Endothelial cell of umbilical vein (primary cell): ENCODE measurements at regions of chr21 and their contacts with region 1.

Region 1: DNA sequence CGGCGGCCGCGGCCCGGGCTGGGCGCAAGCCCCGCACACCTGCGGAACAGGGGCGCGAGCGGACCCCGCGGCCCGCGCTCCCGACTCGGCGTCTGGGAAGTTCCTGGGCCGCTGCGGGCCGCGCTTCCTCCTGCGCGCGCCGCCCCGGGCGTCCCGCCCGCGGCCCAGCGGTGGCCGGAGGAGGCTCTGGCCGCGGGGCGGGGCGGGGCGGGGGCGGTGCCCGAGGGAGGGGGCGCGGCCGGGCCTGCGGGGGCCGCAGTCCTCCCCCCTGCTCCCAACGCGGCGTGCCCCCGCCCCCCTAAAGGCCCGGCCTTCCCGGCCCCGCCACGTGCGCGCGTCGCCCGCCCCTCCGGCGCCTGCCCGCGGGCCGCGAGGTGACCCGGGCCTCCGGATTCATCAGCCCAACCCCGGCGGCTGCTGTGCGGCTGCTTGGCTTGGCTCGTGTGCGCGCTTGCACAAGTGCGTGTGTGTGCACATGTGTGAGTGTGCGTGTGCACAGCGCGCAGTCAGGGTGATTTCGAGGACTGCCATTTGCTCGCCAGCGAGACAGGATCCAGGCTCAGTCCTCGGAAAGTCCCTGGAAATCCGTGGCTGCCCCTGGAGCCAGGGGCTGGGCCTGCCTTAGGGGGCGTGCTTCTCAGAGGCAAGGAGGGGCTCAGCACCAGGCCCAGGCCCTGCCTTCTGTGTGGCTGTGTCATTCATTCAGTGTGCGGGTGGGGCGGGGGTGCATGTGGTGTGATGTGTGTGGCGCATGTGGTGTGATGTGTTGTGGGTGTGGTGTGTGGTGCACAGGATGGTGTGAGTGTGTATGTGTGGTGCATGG is at the start of gene C2CD2:
- DNase-seq: peak; percentile 86
- H3K4me3 ChIP-seq: peak within 1 kb of the TSS; percentile 36 to 74 (median 72)
- H3K27ac ChIP-seq: peak within 1 kb of the TSS; percentile 64
- H3K4me1 ChIP-seq: peaks cover 36% of the 10 kb centered on the region
- H3K27me3 ChIP-seq: no peaks in the 10 kb centered on the region
- CTCF ChIP-seq: peak in 1 of 2 donors; percentile 20
- POLR2A ChIP-seq: peak; percentile 59
- total RNA-seq, gene C2CD2: 33.6 and 41.2 TPM in 2 replicates

Region 2: GRCh38 chr21:41879190-41879998 is 74.6 kb before region 1 on chr21 and contains the start of gene PRDM15:
- CTCF ChIA-PET with region 1: no interaction called
- POLR2A ChIA-PET with region 1: no interaction called
- dilution Hi-C with region 1: no loop called
- intact Hi-C with region 1: loop called (anchors 2 kb)
- DNase-seq: peak; percentile 46
- H3K4me3 ChIP-seq: peak within 1 kb of the TSS; percentile 57 to 94 (median 88)
- H3K27ac ChIP-seq: peak within 1 kb of the TSS; percentile 83
- H3K4me1 ChIP-seq: peaks cover 12% of the 10 kb centered on the region
- H3K27me3 ChIP-seq: no peaks in the 10 kb centered on the region
- CTCF ChIP-seq: no peak
- POLR2A ChIP-seq: peak; percentile 32
- total RNA-seq, gene PRDM15: 10.0 and 12.9 TPM in 2 replicates

Region 3: GRCh38 chr21:41933313-41934086 is 20.5 kb before region 1 on chr21:
- CTCF ChIA-PET with region 1: interaction called, 21 read pairs
- POLR2A ChIA-PET with region 1: no interaction called
- dilution Hi-C with region 1: no loop called
- intact Hi-C with region 1: loop called (anchors 1 kb)
- DNase-seq: peak; percentile 78
- H3K4me3 ChIP-seq: peak overlapping the region in 2 of 3 experiments; percentile 15 to 49
- H3K27ac ChIP-seq: peak overlapping the region; percentile 80
- H3K4me1 ChIP-seq: peaks cover 26% of the 10 kb centered on the region
- H3K27me3 ChIP-seq: no peaks in the 10 kb centered on the region
- CTCF ChIP-seq: peak; percentile 38 to 44
- POLR2A ChIP-seq: no peak

Region 4: GRCh38 chr21:42009831-42010523 is 55.9 kb after region 1 on chr21 and contains the start of gene ZBTB21:
- CTCF ChIA-PET with region 1: interaction called, 4 read pairs
- POLR2A ChIA-PET with region 1: no interaction called
- dilution Hi-C with region 1: no loop called
- intact Hi-C with region 1: loop called (anchors 1 kb)
- DNase-seq: peak; percentile 98
- H3K4me3 ChIP-seq: peak within 1 kb of the TSS; percentile 47 to 70 (median 55)
- H3K27ac ChIP-seq: peak within 1 kb of the TSS; percentile 70
- H3K4me1 ChIP-seq: peaks cover 15% of the 10 kb centered on the region
- H3K27me3 ChIP-seq: peaks cover 3 to 14% of the 10 kb centered on the region in 2 experiments
- CTCF ChIP-seq: no peak
- POLR2A ChIP-seq: peak; percentile 80
- total RNA-seq, gene ZBTB21: 10.8 and 12.4 TPM in 2 replicates

Region 5: GRCh38 chr21:42056996-42057689 is 103.1 kb after region 1 on chr21:
- CTCF ChIA-PET with region 1: no interaction called
- POLR2A ChIA-PET with region 1: no interaction called
- dilution Hi-C with region 1: no loop called
- intact Hi-C with region 1: loop called (anchors 2 kb)
- DNase-seq: peak; percentile 61
- H3K4me3 ChIP-seq: peak overlapping the region in 1 of 3 experiments; percentile 10
- H3K27ac ChIP-seq: peak overlapping the region; percentile 46
- H3K4me1 ChIP-seq: peaks cover 23% of the 10 kb centered on the region
- H3K27me3 ChIP-seq: peaks cover 0 to 2% of the 10 kb centered on the region in 2 experiments
- CTCF ChIP-seq: no peak
- POLR2A ChIP-seq: no peak

Region 6: DNA sequence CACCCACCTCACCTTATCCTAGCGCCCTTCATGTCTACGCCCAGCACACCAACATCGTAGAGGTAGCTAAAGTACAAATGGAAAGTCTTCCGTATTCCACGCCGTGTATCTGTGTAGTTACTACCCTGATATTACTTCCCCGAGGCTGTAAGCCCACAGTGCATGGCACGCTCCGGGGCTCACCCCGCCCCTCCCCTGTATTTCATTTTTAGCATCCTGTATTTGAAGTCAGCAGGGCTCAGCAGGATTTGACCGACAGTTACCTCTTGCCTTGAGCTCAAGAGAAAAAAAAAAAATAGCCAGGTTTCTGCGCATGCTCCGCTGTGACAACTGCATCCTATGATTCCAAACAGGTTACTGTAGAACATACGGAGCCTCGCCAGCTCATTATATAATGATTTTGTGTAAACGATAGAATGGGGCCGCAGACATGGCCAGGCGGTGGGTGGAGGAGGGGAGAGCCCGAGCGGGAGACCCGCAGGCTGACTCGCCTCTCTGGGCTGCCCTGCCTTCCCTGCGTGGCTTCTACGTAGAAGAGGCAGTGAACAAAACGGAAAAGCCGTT is 266.2 kb after region 1 on chr21:
- CTCF ChIA-PET with region 1: no interaction called
- POLR2A ChIA-PET with region 1: no interaction called
- dilution Hi-C with region 1: no loop called
- intact Hi-C with region 1: loop called (anchors 5 kb)
- DNase-seq: peak; percentile 91
- H3K4me3 ChIP-seq: peak overlapping the region; percentile 53 to 65 (median 63)
- H3K27ac ChIP-seq: peak overlapping the region; percentile 53
- H3K4me1 ChIP-seq: peaks cover 24% of the 10 kb centered on the region
- H3K27me3 ChIP-seq: peaks cover 2 to 6% of the 10 kb centered on the region in 2 experiments
- CTCF ChIP-seq: no peak
- POLR2A ChIP-seq: no peak

Region 7: GRCh38 chr21:42454786-42455580 is 500.9 kb after region 1 on chr21:
- CTCF ChIA-PET with region 1: no interaction called
- POLR2A ChIA-PET with region 1: no interaction called
- dilution Hi-C with region 1: no loop called
- intact Hi-C with region 1: loop called (anchors 1 kb)
- DNase-seq: no peak
- H3K4me3 ChIP-seq: no peak overlapping the region
- H3K27ac ChIP-seq: no peak overlapping the region
- H3K4me1 ChIP-seq: no peaks in the 10 kb centered on the region
- H3K27me3 ChIP-seq: peaks cover 2 to 5% of the 10 kb centered on the region in 2 experiments
- CTCF ChIP-seq: no peak
- POLR2A ChIP-seq: no peak